Heart right ventricle (tissue), 16 donors: ENCODE measurements at regions of chrX and their contacts with region 1.

Region 1: GRCh38 chrX:118807151-118808017 is 16.2 kb upstream of the ZCCHC12 start:
- DNase-seq: peak in 1 of 2 donors; percentile 17
- ATAC-seq: peak in 4 of 8 donors; percentile 49 to 71 (median 58)
- H3K4me3 ChIP-seq: no peak overlapping the region
- H3K27ac ChIP-seq: no peak overlapping the region
- H3K4me1 ChIP-seq: peaks cover 0 to 8% (median 0%) of the 10 kb centered on the region in 9 donors
- H3K27me3 ChIP-seq: peaks cover 0 to 20% (median 0%) of the 10 kb centered on the region in 7 donors
- CTCF ChIP-seq: peak; percentile 28 to 72 (median 65)

Region 2: DNA sequence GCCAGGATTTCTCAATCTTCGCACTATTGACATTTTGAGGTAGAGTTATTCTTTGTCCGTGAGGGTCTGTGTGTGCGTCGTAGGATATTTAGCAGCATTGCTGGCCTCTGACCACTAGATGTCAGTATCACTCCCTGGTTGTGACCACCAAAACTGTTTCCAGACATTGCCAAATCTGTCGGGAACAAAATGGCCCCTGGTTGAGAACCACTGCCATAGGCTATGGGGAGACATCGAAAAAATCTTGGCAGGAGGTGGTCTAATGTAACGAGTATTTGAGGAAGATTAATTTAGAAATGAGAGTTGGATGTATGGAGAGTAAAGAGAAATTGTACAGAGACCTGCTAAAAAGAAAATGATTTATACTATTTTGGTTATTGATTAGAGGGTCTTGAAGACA is 203.4 kb before region 1 on chrX:
- intact Hi-C with region 1: loop called in 2 of 10 experiments (anchors 10 kb)
- DNase-seq: peak in 1 of 2 donors; percentile 33
- ATAC-seq: peak in 3 of 8 donors; percentile 31 to 76 (median 48)
- H3K4me3 ChIP-seq: no peak overlapping the region
- H3K27ac ChIP-seq: no peak overlapping the region
- H3K4me1 ChIP-seq: peaks cover 0 to 4% (median 0%) of the 10 kb centered on the region in 9 donors
- H3K27me3 ChIP-seq: peaks cover 0 to 28% (median 0%) of the 10 kb centered on the region in 7 donors
- CTCF ChIP-seq: peak; percentile 43 to 82 (median 71)

Region 3: DNA sequence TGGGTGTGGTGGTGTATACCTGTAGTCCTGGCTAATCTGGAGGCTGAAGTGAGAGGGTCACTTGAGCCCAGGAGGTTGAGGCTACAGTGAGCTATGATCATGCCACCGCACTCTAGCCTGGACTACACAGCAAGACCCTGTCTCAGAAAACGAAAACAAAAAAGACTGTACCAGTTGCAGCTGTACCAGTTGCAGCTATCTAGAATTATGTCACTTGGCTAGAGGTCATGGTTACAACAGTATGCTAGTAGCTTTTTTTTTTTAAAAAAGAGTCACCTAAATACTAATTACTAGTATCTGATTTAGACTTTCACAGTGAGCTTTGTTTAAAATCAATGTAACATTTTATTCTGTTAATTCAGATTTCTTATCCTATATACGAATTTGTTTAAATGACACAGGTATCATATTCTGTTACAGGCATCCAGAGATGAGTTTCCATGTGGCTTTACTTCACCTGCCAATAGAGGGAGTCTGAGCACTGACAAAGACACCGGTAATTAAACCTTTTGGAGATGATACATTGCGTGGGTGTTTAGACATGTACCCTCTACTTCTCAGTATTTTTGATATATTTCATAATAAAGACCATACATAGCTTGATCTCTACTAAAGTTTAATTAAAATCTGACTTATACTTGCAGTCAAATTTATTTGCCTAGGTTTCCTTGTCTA is 180.2 kb before region 1 on chrX:
- intact Hi-C with region 1: loop called in 1 of 10 experiments (anchors 5 kb)
- DNase-seq: no peak
- ATAC-seq: no peak
- H3K4me3 ChIP-seq: no peak overlapping the region
- H3K27ac ChIP-seq: no peak overlapping the region
- H3K4me1 ChIP-seq: peaks cover 0 to 7% (median 0%) of the 10 kb centered on the region in 9 donors
- H3K27me3 ChIP-seq: peaks cover 0 to 23% (median 0%) of the 10 kb centered on the region in 7 donors
- CTCF ChIP-seq: peak in 7 of 9 donors; percentile 20 to 48 (median 27)

Region 4: DNA sequence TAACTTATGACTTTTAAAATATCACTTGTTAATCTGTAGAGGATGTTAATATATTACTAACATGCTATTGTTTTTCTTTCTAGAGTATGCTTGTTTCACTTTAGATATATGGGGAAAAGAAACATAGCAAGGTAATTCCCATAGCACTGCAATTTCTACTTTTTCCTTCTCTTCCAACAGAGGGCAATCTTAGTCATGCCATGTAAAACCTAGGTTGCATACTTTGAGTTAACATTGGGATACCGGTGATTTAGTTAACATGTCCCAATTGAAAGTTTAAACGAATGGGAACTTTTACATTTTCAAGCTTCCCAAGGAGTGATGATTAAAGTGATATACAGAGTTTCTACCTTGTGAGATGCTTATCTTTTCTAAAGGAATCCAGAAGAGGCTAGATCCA is 169.4 kb before region 1 on chrX:
- intact Hi-C with region 1: loop called in 9 of 10 experiments (anchors 5 to 10 kb)
- DNase-seq: no peak
- ATAC-seq: no peak
- H3K4me3 ChIP-seq: no peak overlapping the region
- H3K27ac ChIP-seq: no peak overlapping the region
- H3K4me1 ChIP-seq: no peaks in the 10 kb centered on the region
- H3K27me3 ChIP-seq: peaks cover 0 to 14% (median 0%) of the 10 kb centered on the region in 7 donors
- CTCF ChIP-seq: peak in 6 of 9 donors; percentile 14 to 40 (median 24)

Region 5: GRCh38 chrX:118644378-118644777 is 163.0 kb before region 1 on chrX:
- intact Hi-C with region 1: loop called (anchors 2 to 10 kb)
- DNase-seq: peak in 1 of 2 donors; percentile 3
- ATAC-seq: peak in 1 of 8 donors; percentile 48
- H3K4me3 ChIP-seq: no peak overlapping the region
- H3K27ac ChIP-seq: no peak overlapping the region
- H3K4me1 ChIP-seq: no peaks in the 10 kb centered on the region
- H3K27me3 ChIP-seq: peaks cover 0 to 7% (median 0%) of the 10 kb centered on the region in 7 donors
- CTCF ChIP-seq: peak in 8 of 9 donors; percentile 9 to 59 (median 43)

Region 6: DNA sequence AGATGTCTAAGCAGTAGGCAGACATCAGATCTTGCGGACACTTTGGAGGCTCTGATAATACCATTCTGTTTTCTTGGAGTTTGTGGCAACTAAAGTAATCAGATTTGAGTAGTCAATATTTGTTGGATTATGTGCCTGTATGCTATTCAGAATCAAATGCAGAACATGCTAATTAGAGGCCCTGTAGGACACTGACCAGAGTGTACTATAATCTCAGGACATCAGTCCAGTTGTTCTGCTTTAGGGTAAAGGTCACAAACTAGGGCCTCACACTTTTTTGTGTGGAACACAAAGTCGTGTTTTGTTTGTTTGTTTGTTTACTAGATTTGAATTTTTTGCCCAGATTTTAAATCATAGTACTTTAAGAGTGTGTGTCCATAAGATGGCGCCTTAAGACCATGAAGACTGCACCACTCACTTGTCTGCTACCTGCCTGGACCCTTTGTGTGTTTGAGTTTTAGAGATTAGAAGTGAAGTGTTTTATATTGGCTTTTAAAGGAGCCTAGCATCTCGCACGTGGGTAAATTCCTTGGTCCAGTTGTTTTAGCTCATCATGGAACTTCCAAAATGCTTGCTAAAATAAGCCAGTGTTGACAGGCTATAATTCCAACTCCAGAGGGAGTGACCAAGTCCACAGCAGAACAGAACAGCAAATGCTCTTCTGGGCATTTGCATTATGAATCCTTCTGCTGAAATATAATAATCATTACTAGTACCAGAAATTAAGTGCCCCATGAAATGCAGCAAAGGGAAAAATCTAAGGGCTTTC is 45.3 kb before region 1 on chrX:
- intact Hi-C with region 1: loop called in 1 of 10 experiments (anchors 5 kb)
- DNase-seq: no peak
- ATAC-seq: no peak
- H3K4me3 ChIP-seq: no peak overlapping the region
- H3K27ac ChIP-seq: no peak overlapping the region
- H3K4me1 ChIP-seq: no peaks in the 10 kb centered on the region
- H3K27me3 ChIP-seq: peaks cover 0 to 8% (median 0%) of the 10 kb centered on the region in 7 donors
- CTCF ChIP-seq: peak in 2 of 9 donors; percentile 9 to 27